HepG2 (cell line): ENCODE measurements at regions of chr1 and their contacts with region 1.

Region 1: DNA sequence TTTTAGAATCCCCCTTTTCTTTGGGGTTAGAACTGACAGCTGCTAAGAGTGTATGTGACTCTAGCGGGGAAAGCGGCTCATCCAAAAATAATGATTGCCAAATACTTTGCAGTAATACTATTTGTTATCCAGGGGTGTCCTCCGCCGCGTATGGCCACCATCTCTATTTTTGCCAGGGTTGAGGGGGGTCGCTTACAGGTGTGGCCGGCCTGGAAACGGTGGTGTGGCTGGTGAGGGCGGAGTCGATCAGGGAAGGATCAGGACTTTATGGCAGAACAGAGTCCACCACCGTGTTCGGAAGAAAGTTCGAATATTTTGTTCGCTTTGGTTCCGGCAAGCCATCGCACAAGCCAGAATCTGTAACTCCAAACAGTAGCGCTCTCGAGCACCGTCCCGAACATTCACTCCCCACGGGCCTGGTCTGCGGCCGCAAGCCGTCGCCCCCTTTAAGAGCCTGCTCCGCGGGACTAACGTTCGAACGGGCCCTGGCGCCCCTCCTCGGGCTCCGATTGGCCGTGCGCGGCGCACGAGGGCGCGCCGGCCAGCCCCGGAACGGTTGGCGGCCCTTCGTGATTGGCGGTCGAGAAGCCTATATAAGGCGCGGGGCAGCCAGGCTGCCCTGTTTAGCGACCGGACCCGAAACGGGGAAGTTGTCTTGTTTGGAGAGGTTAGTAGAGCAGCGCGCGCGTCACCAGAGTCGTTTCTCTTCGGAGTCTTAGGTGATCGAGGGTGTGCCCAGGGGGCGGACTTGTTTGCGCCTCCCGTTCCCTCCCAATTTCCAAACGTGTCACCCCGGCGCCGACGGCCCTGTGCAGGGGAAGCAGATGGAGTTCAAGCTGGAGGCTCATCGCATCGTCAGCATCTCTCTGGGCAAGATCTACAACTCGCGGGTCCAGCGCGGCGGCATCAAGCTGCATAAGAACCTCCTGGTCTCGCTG is at the start of gene IER5:
- DNase-seq: peak; percentile 89
- ATAC-seq: peak; percentile 90
- H3K4me3 ChIP-seq: peak within 1 kb of the TSS; percentile 68 to 88 (median 79)
- H3K27ac ChIP-seq: peak within 1 kb of the TSS; percentile 39
- H3K4me1 ChIP-seq: peaks cover 52% of the 10 kb centered on the region
- H3K27me3 ChIP-seq: no peaks in the 10 kb centered on the region; a peak in 2 of 5 replicates
- CTCF ChIP-seq: 0 out of 2 replicates have a peak, but pooled peaks have one; percentile 5
- EP300 ChIP-seq: no peak
- POLR2A ChIP-seq: peak; percentile 100
- RAD21 ChIP-seq: peak; percentile 41; the same call in 1 of the 2 replicates
- total RNA-seq, gene IER5: 3.0 and 3.5 TPM in 2 replicates

Region 2: DNA sequence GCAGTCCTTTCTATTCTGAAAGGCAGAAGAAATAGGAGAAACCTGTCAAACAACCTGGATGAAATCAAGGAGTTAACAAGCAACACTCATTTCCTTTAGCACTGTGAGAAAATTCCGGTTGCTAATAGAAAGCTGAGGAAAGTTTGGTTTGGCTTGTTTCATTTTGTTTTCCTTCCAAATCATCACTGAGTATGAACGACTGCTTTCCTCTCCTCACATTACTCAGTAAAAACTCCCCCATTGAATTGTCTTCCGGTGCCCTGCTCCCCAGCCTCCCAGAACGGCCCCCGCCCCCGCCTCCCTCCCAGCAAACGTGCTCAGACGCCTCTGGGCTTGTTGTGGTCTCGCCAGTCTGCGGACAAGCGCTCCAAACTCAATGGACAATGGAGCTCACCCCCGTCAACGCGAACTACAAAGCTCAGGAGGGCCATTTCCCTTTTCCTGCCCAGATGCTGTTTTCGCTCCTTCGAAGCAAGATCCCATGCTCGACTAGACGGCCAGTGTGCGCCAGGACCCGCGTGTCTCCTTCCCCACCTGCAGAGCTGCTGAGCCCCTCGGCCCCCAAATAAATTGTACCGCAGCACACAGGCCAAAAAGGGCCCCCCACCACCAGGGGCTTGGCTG is 66.4 kb before region 1 on chr1:
- CTCF ChIA-PET with region 1: no interaction called
- POLR2A ChIA-PET with region 1: interaction called, 4 read pairs
- in situ Hi-C with region 1: no loop called
- intact Hi-C with region 1: loop called (anchors 5 kb)
- DNase-seq: peak; percentile 47
- ATAC-seq: peak; percentile 66
- H3K4me3 ChIP-seq: peak overlapping the region; percentile 90 to 94 (median 91)
- H3K27ac ChIP-seq: peak overlapping the region; percentile 77
- H3K4me1 ChIP-seq: peaks cover 43% of the 10 kb centered on the region
- H3K27me3 ChIP-seq: no peaks in the 10 kb centered on the region; a peak in 1 of 5 replicates
- CTCF ChIP-seq: 0 out of 2 replicates have a peak, but pooled peaks have one; percentile 6
- EP300 ChIP-seq: no peak
- POLR2A ChIP-seq: peak in 1 of 2 experiments; percentile 43; a peak in 1 of 4 replicates
- RAD21 ChIP-seq: no peak

Region 3: GRCh38 chr1:181099152-181100014 is 11.0 kb after region 1 on chr1:
- CTCF ChIA-PET with region 1: no interaction called
- POLR2A ChIA-PET with region 1: interaction called, 57 read pairs
- in situ Hi-C with region 1: no loop called
- intact Hi-C with region 1: loop called (anchors 2 kb)
- DNase-seq: no peak
- ATAC-seq: no peak
- H3K4me3 ChIP-seq: no peak overlapping the region
- H3K27ac ChIP-seq: no peak overlapping the region
- H3K4me1 ChIP-seq: peaks cover 77% of the 10 kb centered on the region
- H3K27me3 ChIP-seq: peaks cover 0 to 4% of the 10 kb centered on the region in 2 experiments; a peak in 2 of 5 replicates
- CTCF ChIP-seq: no peak
- EP300 ChIP-seq: no peak
- POLR2A ChIP-seq: no peak
- RAD21 ChIP-seq: no peak

Region 4: DNA sequence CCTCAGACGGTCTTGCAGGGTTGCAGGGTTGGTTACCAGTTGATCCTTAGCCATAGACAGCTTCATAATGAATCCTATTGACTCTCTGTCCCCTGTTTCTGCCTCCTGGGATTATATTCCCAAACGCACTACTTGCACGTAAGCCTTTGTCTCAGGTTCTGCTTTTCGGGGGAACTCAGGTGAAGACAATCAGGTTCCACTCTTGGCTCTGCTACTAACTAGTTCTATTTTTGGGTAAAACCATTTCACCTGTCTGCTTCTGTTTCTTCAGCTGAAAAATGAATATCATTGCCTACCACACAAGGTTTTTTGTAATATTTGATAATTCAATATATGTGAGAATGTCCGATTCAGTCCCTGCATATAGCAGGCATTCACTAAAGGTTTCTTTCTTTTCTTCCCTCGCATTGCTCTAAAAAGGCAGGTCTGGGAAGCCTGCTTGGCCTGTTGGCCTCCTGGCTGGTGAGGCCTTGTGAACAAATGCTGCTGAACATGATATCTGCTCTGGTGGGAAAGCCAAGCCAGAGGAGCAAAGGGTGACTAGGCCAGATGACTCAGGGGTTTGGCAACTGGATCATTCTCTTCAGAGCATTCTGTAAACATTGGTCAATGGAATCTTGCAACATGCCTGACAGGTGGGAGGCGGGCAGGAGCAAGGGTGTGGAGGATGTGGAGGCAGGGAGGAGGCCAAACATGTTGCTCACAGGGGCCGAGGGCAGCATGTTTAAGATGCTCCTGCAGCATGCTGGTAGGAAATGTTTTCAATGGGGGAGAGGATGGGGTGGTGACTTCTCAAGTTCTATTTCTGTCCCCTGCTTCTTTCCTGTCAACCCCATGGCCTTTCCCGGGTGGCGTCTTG is 24.0 kb after region 1 on chr1:
- CTCF ChIA-PET with region 1: no interaction called
- POLR2A ChIA-PET with region 1: interaction called, 28 read pairs
- in situ Hi-C with region 1: no loop called
- intact Hi-C with region 1: loop called (anchors 2 kb)
- DNase-seq: peak; percentile 97
- ATAC-seq: peak; percentile 90
- H3K4me3 ChIP-seq: no peak overlapping the region
- H3K27ac ChIP-seq: peak overlapping the region; percentile 59
- H3K4me1 ChIP-seq: peaks cover 88% of the 10 kb centered on the region
- H3K27me3 ChIP-seq: peaks cover under 1 to 3% of the 10 kb centered on the region in 2 experiments; a peak in 2 of 5 replicates
- CTCF ChIP-seq: peak; percentile 27; the same call in 1 of the 2 replicates
- EP300 ChIP-seq: peak; percentile 81 to 93; a peak in 3 of 4 replicates
- POLR2A ChIP-seq: no peak
- RAD21 ChIP-seq: 0 out of 2 replicates have a peak, but pooled peaks have one; percentile 19

Region 5: GRCh38 chr1:181142096-181142958 is 54.0 kb after region 1 on chr1:
- CTCF ChIA-PET with region 1: interaction called, 20 read pairs
- POLR2A ChIA-PET with region 1: interaction called, 26 read pairs
- in situ Hi-C with region 1: loop called (anchors 5 kb)
- intact Hi-C with region 1: loop called (anchors 1 kb)
- DNase-seq: peak; percentile 86
- ATAC-seq: peak; percentile 97
- H3K4me3 ChIP-seq: peak overlapping the region in 1 of 3 experiments; percentile 57; a peak in 2 of 6 replicates
- H3K27ac ChIP-seq: no peak overlapping the region
- H3K4me1 ChIP-seq: peaks cover 35% of the 10 kb centered on the region
- H3K27me3 ChIP-seq: peaks cover 0 to 9% of the 10 kb centered on the region in 2 experiments; a peak in 1 of 5 replicates
- CTCF ChIP-seq: peak; percentile 98
- EP300 ChIP-seq: no peak
- POLR2A ChIP-seq: no peak
- RAD21 ChIP-seq: peak; percentile 99

Region 6: DNA sequence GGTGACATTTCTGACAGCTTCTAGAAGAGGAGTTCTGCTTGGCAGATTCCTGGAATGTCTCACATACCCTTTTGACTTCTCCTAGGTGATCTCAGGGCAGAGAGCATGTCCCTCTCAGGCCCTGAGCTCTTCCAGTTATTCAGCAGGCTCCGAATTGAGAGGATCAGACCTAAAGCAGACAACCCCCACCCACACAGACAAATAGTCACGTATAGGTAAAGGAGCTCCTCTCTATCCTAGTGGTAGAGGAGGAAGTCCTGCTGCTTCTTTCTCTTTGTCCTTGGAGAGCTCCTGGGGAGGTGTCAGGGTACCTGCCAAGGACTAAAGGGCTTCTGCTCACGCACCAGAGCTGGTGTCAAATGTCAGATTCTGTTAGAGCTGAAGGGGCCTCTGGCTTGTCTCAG is 128.2 kb after region 1 on chr1:
- CTCF ChIA-PET with region 1: no interaction called
- POLR2A ChIA-PET with region 1: no interaction called
- in situ Hi-C with region 1: no loop called
- intact Hi-C with region 1: no loop called
- DNase-seq: no peak
- ATAC-seq: no peak
- H3K4me3 ChIP-seq: no peak overlapping the region
- H3K27ac ChIP-seq: no peak overlapping the region
- H3K4me1 ChIP-seq: no peaks in the 10 kb centered on the region
- H3K27me3 ChIP-seq: peaks cover 0 to 23% of the 10 kb centered on the region in 2 experiments; a peak in 2 of 5 replicates
- CTCF ChIP-seq: no peak
- EP300 ChIP-seq: no peak
- POLR2A ChIP-seq: no peak
- RAD21 ChIP-seq: no peak